Naive thymus-derived CD4-positive, alpha-beta T cell (primary cell): ENCODE measurements at regions of chr2 and their contacts with region 1.

Region 1: DNA sequence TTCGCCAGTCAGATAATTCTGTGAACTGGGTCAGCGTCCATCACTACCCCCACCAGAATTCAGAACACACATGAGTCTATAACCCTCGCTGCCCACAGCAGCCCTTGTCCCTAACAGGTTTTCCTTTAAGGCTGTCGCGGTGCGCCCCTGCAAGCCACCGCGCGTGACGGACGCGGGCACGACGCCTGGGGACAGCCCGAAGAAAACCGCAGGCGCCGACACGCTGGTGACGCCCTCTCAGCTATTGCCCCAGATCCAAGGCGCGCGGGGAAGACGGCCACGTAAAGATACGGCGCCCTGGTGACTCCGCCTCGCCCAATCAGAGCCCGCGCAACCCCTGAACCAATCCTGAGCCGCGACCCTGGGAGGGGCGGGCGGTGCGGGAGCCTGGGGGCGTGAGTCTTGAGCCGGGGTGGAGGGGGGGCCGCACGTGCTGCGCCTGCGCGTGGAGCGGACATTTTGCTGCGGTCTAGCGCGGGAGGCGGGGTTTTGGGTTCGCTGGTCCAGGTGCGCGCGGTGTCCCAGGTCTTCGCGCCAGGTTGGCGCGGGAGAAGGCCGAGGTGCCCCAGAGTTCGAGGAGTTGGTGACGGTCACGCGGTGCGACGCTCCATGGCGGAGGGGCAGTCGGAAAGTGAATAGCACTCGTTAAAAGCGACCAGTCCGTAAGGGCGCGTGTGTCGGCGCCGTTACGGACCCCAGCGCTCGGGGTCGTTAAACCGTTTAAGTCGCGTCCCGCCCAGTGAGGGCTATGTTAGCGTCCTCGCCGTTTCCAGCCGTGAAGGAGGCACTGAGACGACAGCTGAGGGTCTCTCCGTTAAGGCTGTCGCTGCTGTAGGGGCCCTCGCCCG is 15.9 kb downstream of the NMUR1 start:
- DNase-seq: peak; percentile 92 to 99 (median 98)
- ATAC-seq: peak; percentile 99
- H3K4me3 ChIP-seq: peak overlapping the region; percentile 84
- H3K4me3 Mint-ChIP-seq: peak overlapping the region; percentile 80 to 95 (median 92)
- H3K27ac ChIP-seq: peak overlapping the region; percentile 93
- H3K27ac Mint-ChIP-seq: peak overlapping the region; percentile 93 to 99 (median 98)
- H3K4me1 ChIP-seq: peaks cover 5 to 11% of the 10 kb centered on the region in 2 donors
- H3K4me1 Mint-ChIP-seq: peaks cover 0 to 21% (median 14%) of the 10 kb centered on the region in 7 donors
- H3K27me3 ChIP-seq: no peaks in the 10 kb centered on the region
- H3K27me3 Mint-ChIP-seq: peaks cover 0 to 4% (median 0%) of the 10 kb centered on the region in 5 donors

Region 2: GRCh38 chr2:231482806-231483391 is 31.4 kb before region 1 on chr2:
- CTCF ChIA-PET with region 1: interaction called, 11 read pairs
- POLR2A ChIA-PET with region 1: interaction called, 17 read pairs
- intact Hi-C with region 1: loop called (anchors 1 kb)
- DNase-seq: peak; percentile 52 to 82 (median 70)
- ATAC-seq: peak; percentile 86
- H3K4me3 ChIP-seq: peak overlapping the region; percentile 73
- H3K4me3 Mint-ChIP-seq: peak overlapping the region; percentile 62 to 87 (median 82)
- H3K27ac ChIP-seq: peak overlapping the region; percentile 83
- H3K27ac Mint-ChIP-seq: peak overlapping the region; percentile 81 to 96 (median 89)
- H3K4me1 ChIP-seq: peaks cover 0 to 4% of the 10 kb centered on the region in 2 donors
- H3K4me1 Mint-ChIP-seq: peaks cover 0 to 18% (median 11%) of the 10 kb centered on the region in 7 donors
- H3K27me3 ChIP-seq: no peaks in the 10 kb centered on the region
- H3K27me3 Mint-ChIP-seq: no peaks in the 10 kb centered on the region

Region 3: GRCh38 chr2:231530091-231531011 is 16.0 kb after region 1 on chr2 and contains the start of gene NMUR1:
- CTCF ChIA-PET with region 1: no interaction called
- POLR2A ChIA-PET with region 1: no interaction called
- intact Hi-C with region 1: loop called in 1 of 2 experiments (anchors 2 kb)
- DNase-seq: peak; percentile 33 to 86 (median 59)
- ATAC-seq: peak; percentile 95
- H3K4me3 ChIP-seq: peak within 1 kb of the TSS; percentile 33
- H3K4me3 Mint-ChIP-seq: peak within 1 kb of the TSS in 9 of 10 donors; percentile 29 to 83 (median 50)
- H3K27ac ChIP-seq: no peak within 1 kb of the TSS
- H3K27ac Mint-ChIP-seq: peak within 1 kb of the TSS in 3 of 9 donors; percentile 21 to 60 (median 36)
- H3K4me1 ChIP-seq: peaks cover 0 to 20% of the 10 kb centered on the region in 2 donors
- H3K4me1 Mint-ChIP-seq: peaks cover 0 to 28% (median 7%) of the 10 kb centered on the region in 7 donors
- H3K27me3 ChIP-seq: no peaks in the 10 kb centered on the region
- H3K27me3 Mint-ChIP-seq: peaks cover 15 to 39% (median 18%) of the 10 kb centered on the region in 5 donors
- total RNA-seq, gene NMUR1: 0.72 to 7.0 (median 1.4) TPM in 3 of 5 experiments, not detected in the others

Region 4: DNA sequence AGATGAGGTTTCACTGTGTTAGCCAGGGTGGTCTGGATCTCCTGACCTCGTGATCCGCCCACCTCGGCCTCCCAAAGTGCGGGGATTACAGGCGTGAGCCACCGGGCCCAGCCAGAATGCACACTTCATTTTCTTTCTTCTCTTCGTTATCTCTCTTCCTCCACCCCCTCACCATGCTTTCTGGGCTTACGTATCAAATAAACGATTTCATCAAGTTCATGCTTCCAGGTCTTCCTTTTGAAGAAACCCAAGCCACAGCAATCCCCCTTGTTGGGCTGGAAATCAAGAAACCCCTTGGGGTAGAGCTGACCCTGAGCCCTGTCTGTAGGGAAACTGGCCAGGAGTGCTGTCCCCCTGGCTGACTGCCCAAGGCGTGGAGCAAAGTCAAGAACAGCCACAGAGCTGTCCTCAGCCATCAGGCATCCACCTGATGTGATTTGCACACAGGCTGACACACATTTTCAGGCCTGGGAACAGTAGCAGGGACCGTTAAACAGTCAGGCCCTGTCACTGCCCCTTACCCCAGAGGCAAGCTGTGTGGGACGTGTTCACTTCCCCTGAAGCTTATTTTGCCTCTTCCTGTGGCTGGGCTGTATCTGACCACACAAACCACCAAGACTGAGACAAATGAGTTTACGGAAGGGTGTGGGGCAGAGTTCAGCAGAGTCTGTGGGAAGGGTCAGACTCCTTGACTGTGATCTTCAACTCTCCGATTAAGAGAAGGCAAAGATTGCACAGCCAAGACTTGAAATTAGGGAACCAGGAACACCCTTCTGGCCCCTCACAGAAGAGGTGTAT is 31.0 kb after region 1 on chr2:
- CTCF ChIA-PET with region 1: no interaction called
- POLR2A ChIA-PET with region 1: no interaction called
- intact Hi-C with region 1: loop called in 1 of 2 experiments (anchors 1 kb)
- DNase-seq: peak in 4 of 9 donors; percentile 13 to 71 (median 23)
- ATAC-seq: peak; percentile 96
- H3K4me3 ChIP-seq: peak overlapping the region; percentile 35
- H3K4me3 Mint-ChIP-seq: peak overlapping the region; percentile 43 to 81 (median 75)
- H3K27ac ChIP-seq: no peak overlapping the region
- H3K27ac Mint-ChIP-seq: peak overlapping the region; percentile 37 to 96 (median 66)
- H3K4me1 ChIP-seq: peaks cover 15 to 18% of the 10 kb centered on the region in 2 donors
- H3K4me1 Mint-ChIP-seq: peaks cover 13 to 42% (median 22%) of the 10 kb centered on the region in 7 donors
- H3K27me3 ChIP-seq: no peaks in the 10 kb centered on the region
- H3K27me3 Mint-ChIP-seq: peaks cover 0 to 14% (median 0%) of the 10 kb centered on the region in 5 donors

Region 5: DNA sequence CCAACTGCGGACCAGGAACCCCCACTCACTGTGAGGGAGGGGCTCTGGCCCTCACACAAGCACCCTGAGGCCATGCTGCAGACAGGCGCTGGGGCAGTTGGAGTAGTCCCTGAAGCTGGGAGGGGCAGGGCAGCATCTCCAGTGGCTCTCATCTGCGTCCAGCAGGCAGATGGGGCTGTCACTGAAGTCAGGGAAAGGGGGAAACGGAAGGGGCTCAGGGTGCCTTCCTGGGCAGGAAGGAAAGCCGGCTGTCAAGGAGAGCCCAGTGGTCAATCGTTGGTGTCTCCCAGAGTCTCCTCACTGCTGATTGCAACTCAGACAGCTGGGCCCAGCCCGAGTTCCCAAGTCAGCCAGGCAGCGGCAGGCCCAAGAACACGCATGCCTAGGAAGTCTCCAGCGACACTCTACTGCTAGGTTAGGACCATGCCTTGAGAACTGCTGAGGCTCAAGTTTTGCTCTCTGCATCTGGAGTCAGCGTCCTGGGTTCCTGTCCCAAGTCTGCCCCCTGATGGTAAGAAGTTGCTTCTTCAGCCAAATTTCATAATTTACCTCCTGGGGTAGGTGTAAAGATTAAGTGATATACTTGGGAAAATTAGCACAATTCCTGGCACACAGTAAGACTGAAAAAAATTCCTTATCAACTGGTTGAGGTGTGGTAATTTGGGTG is 43.4 kb after region 1 on chr2:
- CTCF ChIA-PET with region 1: interaction called, 8 read pairs
- POLR2A ChIA-PET with region 1: interaction called, 4 read pairs
- intact Hi-C with region 1: loop called (anchors 1 kb)
- DNase-seq: peak; percentile 29 to 79 (median 76)
- ATAC-seq: peak; percentile 93
- H3K4me3 ChIP-seq: no peak overlapping the region
- H3K4me3 Mint-ChIP-seq: no peak overlapping the region
- H3K27ac ChIP-seq: no peak overlapping the region
- H3K27ac Mint-ChIP-seq: no peak overlapping the region
- H3K4me1 ChIP-seq: peaks cover 0 to 5% of the 10 kb centered on the region in 2 donors
- H3K4me1 Mint-ChIP-seq: peaks cover 0 to 33% (median 9%) of the 10 kb centered on the region in 7 donors
- H3K27me3 ChIP-seq: no peaks in the 10 kb centered on the region
- H3K27me3 Mint-ChIP-seq: peaks cover 0 to 3% (median 0%) of the 10 kb centered on the region in 5 donors

Region 6: GRCh38 chr2:231780909-231781797 is 266.8 kb after region 1 on chr2 and contains the start of gene PDE6D:
- CTCF ChIA-PET with region 1: no interaction called
- POLR2A ChIA-PET with region 1: no interaction called
- intact Hi-C with region 1: loop called (anchors 1 kb)
- DNase-seq: peak; percentile 90 to 98 (median 94)
- ATAC-seq: peak; percentile 94
- H3K4me3 ChIP-seq: peak within 1 kb of the TSS; percentile 100
- H3K4me3 Mint-ChIP-seq: peak within 1 kb of the TSS; percentile 85 to 99 (median 98)
- H3K27ac ChIP-seq: peak within 1 kb of the TSS; percentile 82
- H3K27ac Mint-ChIP-seq: peak within 1 kb of the TSS; percentile 90 to 98 (median 94)
- H3K4me1 ChIP-seq: peaks cover 26 to 30% of the 10 kb centered on the region in 2 donors
- H3K4me1 Mint-ChIP-seq: peaks cover 45 to 76% (median 57%) of the 10 kb centered on the region in 7 donors
- H3K27me3 ChIP-seq: no peaks in the 10 kb centered on the region
- H3K27me3 Mint-ChIP-seq: peaks cover 0 to 5% (median 0%) of the 10 kb centered on the region in 5 donors
- total RNA-seq, gene PDE6D: 14.3 to 35.7 (median 25.2) TPM